Activated B cell treated with CpG ODN at 0.5 μM for 24 hours (primary cell): ENCODE measurements at regions of chr3 and their contacts with region 1.

Region 1: GRCh38 chr3:125594581-125595011 is 701 bp downstream of the OSBPL11 start:
- DNase-seq: no peak
- ATAC-seq: no peak
- H3K4me3 Mint-ChIP-seq: peak overlapping the region; percentile 97
- H3K27ac Mint-ChIP-seq: peak overlapping the region; percentile 92
- H3K4me1 Mint-ChIP-seq: peaks cover 44% of the 10 kb centered on the region
- H3K27me3 Mint-ChIP-seq: no peaks in the 10 kb centered on the region
- CTCF ChIP-seq: no peak

Region 2: DNA sequence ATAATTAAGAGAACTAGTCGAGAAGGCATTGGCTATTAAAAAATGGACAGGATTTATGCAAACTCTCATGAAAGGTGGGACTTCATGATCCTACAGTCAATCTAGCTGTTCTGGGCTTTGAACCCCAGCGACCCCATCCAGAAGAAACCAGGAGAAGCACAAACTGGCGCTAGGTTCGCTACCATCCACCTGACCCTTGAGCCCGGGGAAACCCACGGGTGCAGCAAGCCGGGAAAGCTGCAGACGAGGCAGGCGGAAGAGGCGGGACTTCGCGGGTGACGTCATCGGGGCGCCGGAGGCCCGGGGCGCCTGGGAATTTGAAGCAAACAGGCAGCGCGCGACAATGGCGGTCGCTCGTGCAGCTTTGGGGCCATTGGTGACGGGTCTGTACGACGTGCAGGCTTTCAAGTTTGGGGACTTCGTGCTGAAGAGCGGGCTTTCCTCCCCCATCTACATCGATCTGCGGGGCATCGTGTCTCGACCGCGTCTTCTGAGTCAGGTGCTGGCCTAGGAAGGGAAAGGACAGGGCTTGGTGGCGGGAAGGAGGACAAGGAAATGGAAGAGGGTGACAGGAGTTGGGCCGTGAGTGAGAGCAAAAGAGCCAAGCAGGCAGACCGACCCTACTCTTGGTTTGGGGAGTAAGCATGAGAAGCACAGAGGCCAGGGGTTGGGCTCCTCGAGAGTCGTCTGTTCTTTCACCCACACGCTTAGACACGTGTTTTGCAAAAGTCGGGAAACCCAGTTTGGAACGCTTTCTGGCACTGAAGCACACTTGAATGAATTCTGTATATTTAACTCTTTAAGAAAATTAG is 864.3 kb before region 1 on chr3 and contains the start of gene UMPS:
- CTCF ChIA-PET with region 1: no interaction called
- POLR2A ChIA-PET with region 1: interaction called, 10 read pairs
- intact Hi-C with region 1: loop called (anchors 10 kb)
- DNase-seq: peak; percentile 88
- ATAC-seq: peak; percentile 98
- H3K4me3 Mint-ChIP-seq: peak within 1 kb of the TSS; percentile 100
- H3K27ac Mint-ChIP-seq: peak within 1 kb of the TSS; percentile 96
- H3K4me1 Mint-ChIP-seq: peaks cover 29% of the 10 kb centered on the region
- H3K27me3 Mint-ChIP-seq: peaks cover 12% of the 10 kb centered on the region
- CTCF ChIP-seq: no peak
- total RNA-seq, gene UMPS: 27.1 and 31.6 TPM in 2 replicates

Region 3: GRCh38 chr3:125334675-125335560 is 259.7 kb before region 1 on chr3:
- CTCF ChIA-PET with region 1: no interaction called
- POLR2A ChIA-PET with region 1: no interaction called
- intact Hi-C with region 1: no loop called
- DNase-seq: no peak
- ATAC-seq: no peak
- H3K4me3 Mint-ChIP-seq: no peak overlapping the region
- H3K27ac Mint-ChIP-seq: no peak overlapping the region
- H3K4me1 Mint-ChIP-seq: peaks cover 46% of the 10 kb centered on the region
- H3K27me3 Mint-ChIP-seq: no peaks in the 10 kb centered on the region
- CTCF ChIP-seq: no peak

Region 4: DNA sequence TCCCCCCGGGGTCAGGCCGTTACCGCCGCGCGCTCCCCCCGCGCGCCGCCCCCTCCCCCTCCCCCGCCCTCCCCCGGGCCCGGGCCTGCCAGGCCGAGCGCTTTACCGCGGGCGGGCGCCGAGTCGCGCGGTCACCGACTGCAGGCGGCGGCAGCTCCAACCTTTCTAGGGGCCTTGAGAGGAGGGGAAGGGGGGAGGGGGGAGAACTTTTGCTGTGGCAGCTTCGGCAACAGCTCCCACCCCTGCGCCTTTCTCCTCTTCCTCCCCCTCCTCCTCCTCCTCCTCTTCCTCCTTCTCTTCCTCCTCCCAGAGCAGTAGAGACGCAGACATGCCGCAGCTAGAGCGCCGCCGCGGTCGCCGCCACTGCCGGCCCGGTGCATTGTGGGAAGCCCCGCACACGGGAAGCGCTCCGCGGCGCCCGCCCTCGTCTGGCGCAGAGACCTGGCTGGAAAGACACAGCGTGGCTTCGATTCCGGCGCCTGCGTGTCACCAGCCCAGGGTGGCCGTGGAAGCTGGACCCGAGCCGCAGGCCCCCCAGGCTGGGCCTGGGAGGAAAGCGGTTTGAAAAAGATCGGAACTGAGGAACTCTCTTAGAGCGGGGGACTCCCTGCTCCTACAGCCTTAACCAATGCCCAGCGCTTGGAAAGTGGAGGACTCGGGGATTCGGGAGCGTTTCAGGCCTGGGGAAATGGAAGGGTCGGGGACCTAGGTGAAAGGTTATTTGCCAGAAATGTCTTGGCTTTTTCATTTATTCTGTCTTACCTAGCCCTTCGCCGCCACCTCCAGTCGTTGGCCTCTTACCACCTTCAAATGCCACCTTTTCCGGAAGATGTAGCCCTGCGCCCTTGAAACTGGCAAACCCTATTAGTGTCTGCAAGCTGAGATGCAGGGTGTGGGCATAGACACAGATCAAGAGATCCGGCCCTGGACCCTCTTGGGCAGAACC is 219.3 kb before region 1 on chr3 and contains the start of gene ZNF148:
- CTCF ChIA-PET with region 1: no interaction called
- POLR2A ChIA-PET with region 1: interaction called, 3 read pairs
- intact Hi-C with region 1: loop called (anchors 2 kb)
- DNase-seq: peak; percentile 92
- ATAC-seq: peak; percentile 92
- H3K4me3 Mint-ChIP-seq: peak within 1 kb of the TSS; percentile 96
- H3K27ac Mint-ChIP-seq: peak within 1 kb of the TSS; percentile 92
- H3K4me1 Mint-ChIP-seq: peaks cover 39% of the 10 kb centered on the region
- H3K27me3 Mint-ChIP-seq: no peaks in the 10 kb centered on the region
- CTCF ChIP-seq: no peak
- total RNA-seq, gene ZNF148: 46.6 and 57.6 TPM in 2 replicates

Region 5: GRCh38 chr3:125608419-125608818 is 13.8 kb after region 1 on chr3:
- CTCF ChIA-PET with region 1: no interaction called
- POLR2A ChIA-PET with region 1: no interaction called
- intact Hi-C with region 1: no loop called
- DNase-seq: no peak
- ATAC-seq: no peak
- H3K4me3 Mint-ChIP-seq: no peak overlapping the region
- H3K27ac Mint-ChIP-seq: no peak overlapping the region
- H3K4me1 Mint-ChIP-seq: no peaks in the 10 kb centered on the region
- H3K27me3 Mint-ChIP-seq: peaks cover 8% of the 10 kb centered on the region
- CTCF ChIP-seq: no peak

Region 6: GRCh38 chr3:125633767-125634166 is 39.2 kb after region 1 on chr3:
- CTCF ChIA-PET with region 1: no interaction called
- POLR2A ChIA-PET with region 1: interaction called, 5 read pairs
- intact Hi-C with region 1: loop called (anchors 1 kb)
- DNase-seq: no peak
- ATAC-seq: no peak
- H3K4me3 Mint-ChIP-seq: no peak overlapping the region
- H3K27ac Mint-ChIP-seq: no peak overlapping the region
- H3K4me1 Mint-ChIP-seq: peaks cover 12% of the 10 kb centered on the region
- H3K27me3 Mint-ChIP-seq: peaks cover 7% of the 10 kb centered on the region
- CTCF ChIP-seq: no peak

Region 7: DNA sequence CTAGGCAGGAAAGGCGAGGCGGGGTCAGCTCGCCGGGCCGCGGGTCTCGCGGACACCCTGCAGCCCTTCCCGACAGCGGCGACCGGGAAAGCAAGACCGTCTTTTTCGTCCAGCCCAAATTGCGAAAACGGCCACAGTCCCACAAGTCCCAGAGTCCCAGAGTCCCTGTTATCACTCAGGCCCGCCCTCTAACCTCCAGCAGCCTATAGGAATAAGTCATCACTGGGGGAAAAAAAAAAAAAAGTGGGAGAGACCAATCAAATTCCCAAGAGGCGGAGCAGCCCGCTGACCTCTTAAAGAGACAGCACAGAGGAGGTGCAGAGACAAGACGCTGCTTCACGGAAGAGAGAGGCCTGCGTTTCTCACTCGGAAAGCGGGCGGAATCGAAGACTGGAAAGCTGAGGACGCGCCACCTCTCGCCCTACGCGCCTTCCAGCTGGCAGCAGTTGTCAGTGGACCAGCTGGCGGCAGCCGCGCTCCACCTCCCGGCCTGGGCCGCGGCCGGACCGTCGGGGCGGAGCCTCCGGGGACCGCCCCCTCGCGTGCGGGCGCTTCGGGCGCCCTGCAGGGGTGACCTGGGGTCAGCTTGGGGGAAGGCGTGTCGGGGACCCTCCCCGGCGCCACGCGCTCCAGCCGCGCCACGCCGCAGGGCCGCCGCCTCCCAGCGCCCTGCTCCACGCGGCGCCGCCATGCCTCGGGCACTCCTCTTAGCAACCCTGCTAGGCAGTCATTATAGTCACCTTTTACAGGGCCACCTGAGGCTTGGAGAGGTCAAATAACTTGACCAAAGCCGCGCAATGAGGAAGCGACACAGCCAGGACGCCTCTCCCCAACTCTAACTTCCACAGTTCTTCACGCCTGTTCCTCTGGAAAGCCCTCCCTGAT is 1996.2 kb after region 1 on chr3 and contains the start of gene TPRA1:
- CTCF ChIA-PET with region 1: no interaction called
- POLR2A ChIA-PET with region 1: no interaction called
- intact Hi-C with region 1: loop called (anchors 10 kb)
- DNase-seq: peak; percentile 79
- ATAC-seq: peak; percentile 82
- H3K4me3 Mint-ChIP-seq: peak within 1 kb of the TSS; percentile 90
- H3K27ac Mint-ChIP-seq: peak within 1 kb of the TSS; percentile 85
- H3K4me1 Mint-ChIP-seq: peaks cover 28% of the 10 kb centered on the region
- H3K27me3 Mint-ChIP-seq: no peaks in the 10 kb centered on the region
- CTCF ChIP-seq: no peak
- total RNA-seq, gene TPRA1: 17.5 and 18.3 TPM in 2 replicates